Ovary (tissue), 10 donors: ENCODE measurements at regions of chr9 and their contacts with region 1.

Region 1: DNA sequence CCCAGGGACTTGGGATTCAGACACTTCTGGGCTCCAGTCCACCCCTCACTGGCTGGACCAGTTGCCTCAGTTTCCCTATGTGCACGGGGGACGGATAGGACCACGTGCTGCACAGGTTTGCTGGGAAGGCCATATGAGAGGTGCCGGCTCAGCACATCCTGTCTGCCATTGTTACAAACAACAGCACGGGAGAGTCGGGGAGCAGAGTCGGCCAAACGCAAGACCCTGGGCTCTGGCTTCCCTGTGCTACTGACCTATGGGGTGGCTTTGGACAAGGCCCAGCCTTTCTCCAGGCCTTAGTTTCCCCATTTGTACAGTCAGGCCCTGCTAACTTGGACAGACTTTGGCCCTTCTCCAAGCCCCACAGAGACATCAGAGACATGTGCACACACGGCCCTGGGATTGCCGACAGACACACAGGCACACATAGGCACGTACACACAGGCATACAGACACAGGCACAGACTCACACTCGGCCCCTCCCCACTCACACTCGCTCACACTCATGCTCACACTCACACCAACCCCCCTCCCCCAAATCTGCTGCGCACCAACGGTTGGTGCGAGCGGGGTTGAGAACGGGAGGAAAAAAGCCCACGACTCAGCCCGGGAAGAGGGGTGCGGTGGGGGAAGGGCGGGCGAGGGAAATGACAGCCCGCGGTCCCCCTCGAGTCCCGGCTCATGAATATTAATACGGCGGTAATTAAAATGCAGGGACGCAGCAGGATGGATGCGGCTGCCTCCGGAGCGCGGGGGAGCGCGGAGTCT is 133.1 kb downstream of the C9orf50 start:
- DNase-seq: peak in 4 of 5 donors; percentile 69 to 80 (median 76)
- H3K4me3 ChIP-seq: peak overlapping the region; percentile 53
- H3K27ac ChIP-seq: peak overlapping the region; percentile 96 to 100
- H3K4me1 ChIP-seq: peaks cover 34% of the 10 kb centered on the region
- H3K27me3 ChIP-seq: no peaks in the 10 kb centered on the region
- CTCF ChIP-seq: no peak
- EP300 ChIP-seq: no peak
- POLR2A ChIP-seq: no peak

Region 2: GRCh38 chr9:129333953-129334724 is 153.7 kb before region 1 on chr9:
- intact Hi-C with region 1: loop called in 2 of 4 experiments (anchors 5 kb)
- DNase-seq: peak; percentile 89 to 95 (median 94)
- H3K4me3 ChIP-seq: no peak overlapping the region
- H3K27ac ChIP-seq: peak overlapping the region; percentile 26 to 80
- H3K4me1 ChIP-seq: peaks cover 19% of the 10 kb centered on the region
- H3K27me3 ChIP-seq: no peaks in the 10 kb centered on the region
- CTCF ChIP-seq: no peak
- EP300 ChIP-seq: peak; percentile 96
- POLR2A ChIP-seq: no peak